HCT116 (cell line): ENCODE measurements at regions of chr10 and their contacts with region 1.

Region 1: DNA sequence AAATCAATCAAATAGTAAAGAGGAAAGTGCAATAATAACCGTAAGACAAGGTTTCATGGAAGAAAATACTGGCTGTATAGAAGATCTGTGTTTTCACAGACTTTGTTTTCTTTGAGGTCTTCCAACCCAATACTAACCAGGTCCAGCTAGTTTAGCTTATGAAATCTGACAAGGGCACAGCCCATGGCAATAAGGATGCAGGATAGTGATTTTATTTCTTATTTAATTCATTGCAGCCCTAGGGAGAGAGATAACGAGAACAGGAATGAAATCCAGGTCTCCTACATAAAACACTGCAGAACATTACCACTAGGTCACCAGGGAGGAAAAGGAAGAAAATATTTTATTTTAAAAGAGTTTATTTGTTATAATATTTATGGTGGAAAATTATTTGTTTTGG is 145.1 kb downstream of the DNAJC1 start:
- DNase-seq: no peak
- ATAC-seq: no peak
- H3K4me3 ChIP-seq: no peak overlapping the region
- H3K27ac ChIP-seq: no peak overlapping the region
- H3K4me1 ChIP-seq: no peaks in the 10 kb centered on the region
- H3K27me3 ChIP-seq: no peaks in the 10 kb centered on the region
- CTCF ChIP-seq: no peak
- POLR2A ChIP-seq: no peak
- RAD21 ChIP-seq: no peak

Region 2: GRCh38 chr10:21495752-21496342 is 362.6 kb before region 1 on chr10:
- CTCF ChIA-PET with region 1: no interaction called
- POLR2A ChIA-PET with region 1: no interaction called
- RAD21 ChIA-PET with region 1: no interaction called
- intact Hi-C with region 1: no loop called
- DNase-seq: peak; percentile 67
- ATAC-seq: peak; percentile 72
- H3K4me3 ChIP-seq: peak overlapping the region; percentile 63 to 80
- H3K27ac ChIP-seq: peak overlapping the region; percentile 83
- H3K4me1 ChIP-seq: peaks cover 2 to 20% of the 10 kb centered on the region in 2 experiments; a peak in 2 of 4 replicates
- H3K27me3 ChIP-seq: peaks cover 3% of the 10 kb centered on the region; the same call in 1 of the 2 replicates
- CTCF ChIP-seq: peak; percentile 72 to 92 (median 87)
- POLR2A ChIP-seq: peak; percentile 62
- RAD21 ChIP-seq: peak; percentile 96

Region 3: DNA sequence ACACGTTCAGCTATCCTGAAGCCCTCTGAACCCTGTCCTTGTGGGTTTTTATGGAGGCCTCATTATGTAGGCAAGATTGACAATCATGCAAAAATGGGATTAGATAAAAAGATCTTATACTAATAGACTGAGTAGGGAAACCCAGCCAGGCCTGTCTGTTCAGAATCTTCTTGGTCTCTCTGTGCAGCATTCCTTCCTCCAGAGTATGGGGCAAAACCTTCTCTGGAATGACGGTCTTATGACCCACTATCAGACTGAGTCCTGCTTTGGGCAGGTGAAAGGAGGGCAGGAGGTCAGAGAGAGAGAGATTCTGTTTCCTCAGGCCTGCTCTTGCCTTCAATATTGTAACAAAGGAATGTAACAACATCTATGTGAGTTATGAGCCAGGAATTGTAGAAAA is 37.5 kb before region 1 on chr10:
- CTCF ChIA-PET with region 1: no interaction called
- POLR2A ChIA-PET with region 1: no interaction called
- RAD21 ChIA-PET with region 1: no interaction called
- intact Hi-C with region 1: loop called (anchors 5 kb)
- DNase-seq: no peak
- ATAC-seq: no peak
- H3K4me3 ChIP-seq: no peak overlapping the region
- H3K27ac ChIP-seq: no peak overlapping the region
- H3K4me1 ChIP-seq: no peaks in the 10 kb centered on the region
- H3K27me3 ChIP-seq: no peaks in the 10 kb centered on the region
- CTCF ChIP-seq: no peak
- POLR2A ChIP-seq: no peak
- RAD21 ChIP-seq: no peak